ENCODE measurements at regions of chr7 and their contacts with region 1.

Region 1: DNA sequence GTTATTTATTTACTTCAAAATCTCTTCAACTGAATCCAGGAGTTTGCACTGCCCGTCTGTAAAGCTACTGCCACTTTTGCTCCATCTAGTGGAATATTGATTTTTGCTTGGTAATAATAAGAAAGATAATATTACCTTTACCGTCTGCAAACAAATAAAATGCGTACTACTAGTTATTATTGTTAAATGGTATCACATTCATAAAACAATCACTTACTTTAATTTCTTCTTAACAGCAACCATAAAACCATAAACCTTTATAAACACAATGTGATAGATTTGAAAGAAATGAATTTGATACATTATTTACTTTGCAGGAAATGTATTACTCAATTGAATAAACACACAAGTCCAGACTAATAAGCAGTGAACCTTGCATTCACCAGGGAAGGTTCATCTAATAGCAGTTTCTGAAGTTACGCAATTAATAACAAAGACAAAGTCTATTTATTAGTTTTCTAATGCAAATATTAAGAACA is 6.4 kb downstream of the AGMO start:
- DNase-seq: no peak
- H3K4me3 ChIP-seq: no peak overlapping the region
- H3K27ac ChIP-seq: no peak overlapping the region
- H3K4me1 ChIP-seq: no peaks in the 10 kb centered on the region
- H3K27me3 ChIP-seq: no peaks in the 10 kb centered on the region
- CTCF ChIP-seq: no peak
- EP300 ChIP-seq: no peak
- POLR2A ChIP-seq: no peak

Region 2: DNA sequence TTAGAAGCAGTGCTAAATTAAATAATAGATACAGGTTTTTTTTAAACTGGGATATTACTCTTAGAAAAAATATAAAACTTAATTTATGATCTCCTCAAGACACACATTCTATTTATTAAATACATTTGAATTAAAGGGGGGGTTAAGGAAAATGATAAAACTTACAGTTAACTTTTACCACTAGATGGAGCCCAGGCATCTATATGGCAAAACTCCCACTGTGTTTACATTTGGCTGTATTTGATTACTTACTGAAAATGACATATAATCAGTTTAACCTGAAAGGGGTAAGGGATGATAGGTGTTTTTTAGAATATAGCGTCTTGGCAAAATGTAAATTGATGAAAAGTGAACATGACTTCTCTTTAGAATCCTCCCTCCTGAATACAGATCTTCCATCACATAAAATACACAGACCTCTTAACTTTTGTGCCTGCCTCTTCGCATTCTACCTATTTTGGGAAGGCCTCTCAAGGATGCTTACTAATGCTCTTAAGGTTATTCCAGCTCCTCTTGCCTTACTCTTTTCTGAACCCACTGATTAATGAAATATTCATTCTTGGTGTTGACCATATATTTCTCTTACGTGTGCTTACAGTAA is 229.3 kb before region 1 on chr7:
- intact Hi-C with region 1: no loop called
- DNase-seq: no peak
- H3K4me3 ChIP-seq: no peak overlapping the region
- H3K27ac ChIP-seq: no peak overlapping the region
- H3K4me1 ChIP-seq: peaks cover 0 to 6% (median 2%) of the 10 kb centered on the region in 4 donors
- H3K27me3 ChIP-seq: no peaks in the 10 kb centered on the region
- CTCF ChIP-seq: peak in 2 of 4 experiments; percentile 19 to 49
- EP300 ChIP-seq: no peak
- POLR2A ChIP-seq: no peak

Region 3: DNA sequence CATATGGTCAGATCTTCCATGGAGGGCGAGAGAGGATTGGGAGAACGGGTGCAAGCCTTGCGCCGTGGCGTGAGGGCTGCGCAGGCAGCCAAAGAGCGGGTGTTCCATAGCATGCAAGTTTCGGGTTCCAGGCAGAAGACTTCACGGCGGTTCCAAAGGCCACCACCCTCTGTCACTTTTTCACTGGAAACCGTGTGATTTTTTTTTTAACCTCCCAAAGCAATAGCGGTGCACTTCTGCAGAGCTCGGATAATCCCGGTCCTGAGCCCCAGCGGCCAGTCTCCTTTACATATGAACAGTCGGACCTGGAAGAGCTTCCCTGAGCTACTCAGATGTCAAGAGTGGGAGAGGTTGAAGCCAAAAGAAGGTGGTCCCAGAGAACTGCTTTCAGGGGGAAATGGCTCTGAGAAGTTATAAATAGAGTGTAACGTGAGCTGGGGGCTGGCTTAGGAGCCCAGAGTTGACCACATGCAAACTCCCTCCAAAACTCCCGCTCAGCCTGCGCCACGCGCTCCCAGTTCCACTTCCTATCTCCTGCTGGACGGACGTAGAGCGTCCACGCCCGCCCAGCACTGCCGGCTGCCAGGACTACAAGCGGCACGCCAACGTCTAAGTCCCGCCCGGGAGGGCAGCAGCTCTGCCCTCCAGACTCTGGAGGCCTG is 131.0 kb after region 1 on chr7 and contains the start of gene MEOX2:
- intact Hi-C with region 1: loop called (anchors 10 kb)
- DNase-seq: peak; percentile 90
- H3K4me3 ChIP-seq: peak within 1 kb of the TSS; percentile 43 to 53 (median 52)
- H3K27ac ChIP-seq: peak within 1 kb of the TSS; percentile 65 to 86 (median 76)
- H3K4me1 ChIP-seq: peaks cover 0 to 27% (median 25%) of the 10 kb centered on the region in 4 donors
- H3K27me3 ChIP-seq: peaks cover 17 to 69% (median 39%) of the 10 kb centered on the region in 3 donors
- CTCF ChIP-seq: no peak
- EP300 ChIP-seq: no peak
- POLR2A ChIP-seq: no peak
- total RNA-seq, gene MEOX2: 1.6 to 9.7 (median 6.7) TPM